Transverse colon (tissue), 4 donors: ENCODE measurements at regions of chr6 and their contacts with region 1.

Region 1: GRCh38 chr6:86502497-86502896 is 434.8 kb upstream of the HTR1E start:
- DNase-seq: no peak
- H3K4me3 ChIP-seq: no peak overlapping the region
- H3K27ac ChIP-seq: no peak overlapping the region
- H3K4me1 ChIP-seq: no peaks in the 10 kb centered on the region
- H3K27me3 ChIP-seq: no peaks in the 10 kb centered on the region
- CTCF ChIP-seq: no peak
- EP300 ChIP-seq: no peak
- POLR2A ChIP-seq: no peak

Region 2: DNA sequence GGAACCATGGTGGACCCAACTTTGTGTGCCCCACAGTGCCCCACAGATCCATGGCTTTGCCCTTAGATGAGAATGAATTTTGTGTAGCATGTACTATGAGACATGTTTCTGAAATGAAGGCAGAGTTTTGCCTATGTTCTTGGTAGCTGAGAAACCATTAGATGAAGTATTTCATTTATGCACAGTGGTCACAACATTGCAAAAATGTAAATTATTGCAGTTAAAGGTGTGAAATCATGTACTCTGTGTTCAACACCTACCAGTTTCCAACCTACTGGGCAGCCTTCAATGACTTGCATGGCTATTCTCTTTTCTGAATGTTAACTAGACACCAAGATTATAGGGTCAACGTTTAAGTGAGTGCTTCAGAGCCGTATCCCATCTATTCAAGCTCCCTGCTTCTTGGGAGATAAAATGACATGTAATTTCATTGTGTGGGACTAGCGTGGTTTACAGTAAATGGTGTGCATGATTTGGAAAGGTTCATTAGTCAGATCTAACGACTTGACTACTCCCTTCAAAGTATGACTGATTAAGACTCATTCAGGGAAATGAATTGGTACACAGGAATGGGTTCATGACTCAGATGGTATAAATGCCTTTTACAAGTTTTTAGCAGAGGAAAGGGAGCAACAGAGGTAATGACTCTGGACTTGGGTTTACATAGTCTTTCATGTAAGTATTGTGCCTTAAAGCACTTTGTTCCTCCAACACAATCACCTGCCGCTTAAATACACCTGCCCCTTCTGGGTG is 1305.7 kb after region 1 on chr6:
- in situ Hi-C with region 1: no loop called
- intact Hi-C with region 1: loop called (anchors 5 kb)
- DNase-seq: no peak
- H3K4me3 ChIP-seq: no peak overlapping the region
- H3K27ac ChIP-seq: no peak overlapping the region
- H3K4me1 ChIP-seq: no peaks in the 10 kb centered on the region
- H3K27me3 ChIP-seq: no peaks in the 10 kb centered on the region
- CTCF ChIP-seq: no peak
- EP300 ChIP-seq: no peak
- POLR2A ChIP-seq: no peak